ENCODE measurements at regions of chr13 and their contacts with region 1.

Region 1: DNA sequence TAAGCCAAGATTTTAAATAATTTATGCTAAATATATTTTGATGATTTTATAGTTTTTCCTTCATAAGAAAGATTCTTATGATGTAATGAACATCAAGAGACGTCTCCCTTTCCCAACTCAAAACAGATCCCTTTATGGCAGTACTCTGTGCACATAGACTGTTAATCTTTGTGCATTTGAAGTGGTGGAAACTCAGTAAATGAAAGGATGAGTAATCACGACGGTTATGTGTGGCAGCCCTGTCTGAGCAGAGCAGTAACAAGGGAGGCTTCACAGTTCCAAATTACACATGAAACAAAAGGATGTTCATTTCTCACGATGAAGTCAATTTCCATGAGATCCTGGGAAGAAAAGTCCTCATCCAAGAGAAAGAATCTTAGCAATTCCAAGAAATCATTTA is 498.1 kb downstream of the KLF5 start:
- DNase-seq: no peak
- H3K4me3 ChIP-seq: no peak overlapping the region
- CTCF ChIP-seq: no peak

Region 2: GRCh38 chr13:73505376-73505890 is 51.5 kb before region 1 on chr13:
- in situ Hi-C with region 1: no loop called
- DNase-seq: no peak
- H3K4me3 ChIP-seq: no peak overlapping the region
- CTCF ChIP-seq: no peak

Region 3: DNA sequence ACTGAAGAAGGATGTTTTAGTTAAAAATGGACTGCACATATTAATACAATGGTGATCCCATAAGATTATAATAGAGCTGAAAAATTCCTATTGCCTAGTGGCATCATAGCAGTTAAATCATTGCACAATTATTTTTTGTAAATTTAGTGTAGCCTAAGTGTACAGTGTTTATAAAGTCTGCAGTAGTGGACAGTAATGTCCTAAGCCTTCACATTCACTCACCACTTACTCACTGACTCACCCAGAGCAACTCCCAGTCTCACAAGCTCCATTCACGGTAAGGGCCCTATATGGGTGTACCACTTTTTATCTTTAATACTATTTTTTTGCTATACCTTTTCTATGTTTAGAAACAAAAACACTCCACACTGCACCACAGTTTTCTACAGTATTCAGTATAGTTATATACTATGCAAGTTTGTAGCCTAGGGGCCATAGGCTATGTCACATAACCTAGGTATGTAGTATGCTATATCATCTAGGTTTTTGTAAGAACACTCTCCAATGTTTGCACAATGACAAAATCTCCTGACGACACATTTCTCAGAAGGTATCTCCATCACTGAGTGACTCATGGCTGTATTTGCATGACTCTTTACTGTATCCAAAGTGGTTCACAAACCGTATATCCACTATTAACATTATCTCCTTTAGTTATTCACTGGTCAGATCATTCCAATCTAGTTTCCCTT is 41.3 kb after region 1 on chr13:
- in situ Hi-C with region 1: loop called (anchors 5 kb)
- DNase-seq: no peak
- H3K4me3 ChIP-seq: no peak overlapping the region
- CTCF ChIP-seq: no peak